A673 (cell line): ENCODE measurements at regions of chr7 and their contacts with region 1.

Region 1: DNA sequence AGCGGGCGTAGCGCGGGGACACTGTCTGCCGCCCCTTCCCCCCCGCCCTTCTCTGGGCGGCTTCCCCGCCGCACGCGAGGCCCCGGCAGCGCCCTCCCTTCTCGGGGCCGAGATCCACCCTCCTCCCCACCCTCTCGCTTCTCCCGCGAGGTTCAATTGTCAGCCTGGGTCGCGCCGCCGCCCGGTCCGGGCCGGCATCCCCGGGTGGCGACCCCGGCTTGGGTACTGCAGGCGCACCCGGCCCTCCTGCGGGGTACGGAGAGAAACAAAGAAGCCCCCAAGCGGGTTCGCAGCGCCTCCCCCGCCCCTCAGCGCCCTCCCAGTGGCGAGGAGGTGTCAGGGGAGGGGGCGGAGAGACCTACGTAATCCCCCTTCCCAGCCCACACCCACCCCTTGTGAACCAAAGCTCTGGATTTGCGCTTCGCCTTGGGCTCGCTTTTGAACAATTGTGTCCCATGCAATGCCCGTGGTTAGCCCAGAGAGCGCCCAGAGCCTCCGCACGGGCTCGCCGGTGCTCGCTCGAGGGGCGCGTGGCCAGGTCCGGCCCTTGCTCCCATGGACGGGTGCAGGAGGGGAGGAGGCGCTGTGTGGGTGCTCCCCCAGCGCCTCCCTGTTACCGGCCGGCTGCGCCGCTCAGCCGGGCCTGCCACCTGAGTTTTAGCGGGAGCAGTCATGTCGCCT is 634 bp downstream of the HECW1 start:
- DNase-seq: peak; percentile 62
- H3K4me3 ChIP-seq: peak overlapping the region; percentile 56
- H3K27ac ChIP-seq: no peak overlapping the region
- H3K4me1 ChIP-seq: peaks cover 10% of the 10 kb centered on the region
- H3K27me3 ChIP-seq: peaks cover 60% of the 10 kb centered on the region
- CTCF ChIP-seq: no peak

Region 2: DNA sequence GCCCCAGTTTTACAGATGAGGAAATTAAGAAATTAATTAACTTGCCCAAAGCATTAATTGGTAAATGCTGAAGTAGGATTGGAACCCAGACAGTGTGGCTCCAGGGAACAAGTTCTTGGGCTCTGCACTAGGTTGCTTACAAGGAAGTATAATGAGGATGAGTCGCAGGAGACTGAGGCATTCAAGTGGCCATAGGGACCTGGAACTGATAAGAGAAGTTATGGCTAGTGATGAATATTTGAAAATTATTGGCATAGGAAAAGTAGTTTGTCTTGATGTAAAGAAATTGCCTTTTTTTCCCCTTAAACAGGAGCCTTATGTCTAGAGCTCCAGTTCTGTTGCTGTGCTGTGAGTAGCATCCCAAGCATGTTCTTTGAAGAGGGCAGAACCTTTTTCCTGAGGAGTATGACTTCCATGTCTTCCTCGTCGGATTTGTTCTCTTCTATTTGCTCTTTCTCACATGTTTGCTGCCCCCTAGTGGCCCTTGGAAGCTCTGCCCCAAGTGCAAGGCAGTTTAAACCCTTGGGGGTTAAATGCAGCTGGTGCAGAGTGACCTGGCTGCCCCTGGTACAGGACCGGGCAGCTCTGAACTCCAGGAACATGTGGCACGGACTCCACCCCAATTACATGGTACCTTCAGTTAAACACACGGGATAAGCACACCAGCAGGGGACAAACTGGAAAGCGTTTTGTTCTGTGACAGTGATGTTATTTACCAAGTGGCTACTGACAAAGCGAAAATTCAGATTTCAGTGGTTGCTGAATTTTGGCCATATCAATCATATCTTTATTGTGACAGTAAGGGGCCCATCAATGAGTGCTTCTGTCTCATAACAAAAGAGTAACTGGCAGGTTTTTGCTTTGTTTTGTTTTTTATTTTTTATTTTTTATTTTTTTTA is 148.1 kb after region 1 on chr7:
- CTCF ChIA-PET with region 1: interaction called, 4 read pairs
- POLR2A ChIA-PET with region 1: no interaction called
- intact Hi-C with region 1: loop called (anchors 5 kb)
- DNase-seq: peak; percentile 91
- H3K4me3 ChIP-seq: no peak overlapping the region
- H3K27ac ChIP-seq: no peak overlapping the region
- H3K4me1 ChIP-seq: no peaks in the 10 kb centered on the region
- H3K27me3 ChIP-seq: no peaks in the 10 kb centered on the region
- CTCF ChIP-seq: peak; percentile 96

Region 3: DNA sequence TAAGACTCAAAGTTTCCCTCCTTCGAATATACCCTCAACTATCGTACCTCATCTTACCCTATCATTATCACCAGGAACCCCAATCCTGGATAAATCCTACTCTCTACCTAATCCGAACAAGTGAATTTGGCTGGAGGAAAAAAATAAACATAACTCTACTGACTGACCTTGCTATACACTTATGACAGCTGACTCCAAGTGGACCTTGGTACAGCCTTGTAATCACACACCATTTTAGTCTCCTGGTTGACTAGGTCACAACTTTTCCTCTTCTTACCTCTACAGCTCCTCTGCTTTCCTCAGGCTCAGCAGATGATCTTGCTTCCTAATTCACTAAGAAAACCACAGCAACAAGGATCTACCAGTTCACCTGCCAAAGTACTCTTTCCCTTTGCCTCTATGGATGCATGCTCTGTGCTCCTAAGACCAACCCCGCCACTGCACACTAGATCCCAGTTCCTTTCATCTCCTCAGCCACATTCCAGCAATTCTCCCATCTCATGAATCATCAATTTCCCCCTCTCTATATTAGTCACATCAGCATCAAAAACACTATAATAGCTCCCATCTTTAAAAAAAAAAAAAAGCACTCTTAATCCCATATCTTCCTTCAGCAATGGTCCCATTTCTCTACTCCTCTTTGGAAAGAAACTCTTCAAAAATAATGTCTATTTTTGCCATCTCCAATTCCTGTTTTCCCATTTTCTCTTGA is 580.8 kb after region 1 on chr7:
- CTCF ChIA-PET with region 1: no interaction called
- POLR2A ChIA-PET with region 1: no interaction called
- intact Hi-C with region 1: no loop called
- DNase-seq: no peak
- H3K4me3 ChIP-seq: no peak overlapping the region
- H3K27ac ChIP-seq: no peak overlapping the region
- H3K4me1 ChIP-seq: peaks cover 15% of the 10 kb centered on the region
- H3K27me3 ChIP-seq: no peaks in the 10 kb centered on the region
- CTCF ChIP-seq: no peak